A549 (cell line): ENCODE measurements at regions of chr17 and their contacts with region 1.

Region 1: DNA sequence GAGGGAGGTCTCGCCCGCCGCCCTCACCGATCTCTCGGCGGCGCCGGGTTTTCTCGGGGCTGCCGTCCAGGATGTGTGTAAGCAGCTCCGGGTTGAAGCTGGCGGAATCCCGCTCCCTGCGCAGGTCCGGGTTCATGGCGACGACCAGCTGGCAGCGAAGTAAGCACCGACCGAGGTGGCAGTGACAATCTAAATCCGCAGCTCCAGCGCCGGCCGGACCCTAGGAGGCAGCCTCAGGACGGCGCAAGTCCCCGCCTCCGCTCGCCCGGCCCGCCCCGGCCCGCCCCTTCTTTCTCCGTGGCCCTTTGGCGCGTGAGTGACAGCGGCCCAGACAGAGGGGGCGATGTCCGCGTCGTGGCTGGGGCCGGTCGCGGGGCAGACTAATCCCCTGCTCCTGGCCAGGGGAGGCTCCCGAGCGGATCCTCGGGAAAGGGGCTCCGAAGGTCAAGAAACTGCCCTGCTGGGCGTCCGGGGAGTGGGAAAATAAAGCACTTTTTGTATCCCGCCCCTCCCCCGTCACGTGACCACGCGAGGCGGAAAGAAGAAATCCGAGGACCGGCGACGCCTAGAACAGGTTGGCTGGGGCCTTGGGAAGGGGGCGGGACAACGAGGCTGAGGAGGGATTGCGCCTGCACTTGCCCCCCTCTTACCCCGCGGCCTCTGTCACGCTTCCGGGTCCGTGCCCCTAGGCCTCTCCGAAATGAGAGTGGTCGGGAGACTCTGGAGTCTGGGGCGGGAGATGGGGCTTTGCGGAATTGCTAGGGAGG is at the starts of genes ACOX1 and TEN1:
- DNase-seq: peak; percentile 93 to 99
- ATAC-seq: peak; percentile 95 to 97
- H3K4me3 ChIP-seq: peak within 1 kb of the TSS; percentile 84
- H3K27ac ChIP-seq: peak within 1 kb of the TSS; percentile 90 to 93
- H3K4me1 ChIP-seq: peaks cover 43% of the 10 kb centered on the region
- CTCF ChIP-seq: peak; percentile 21; the same call in 2 of the 3 replicates
- EP300 ChIP-seq: no peak
- POLR2A ChIP-seq: peak; percentile 92
- RAD21 ChIP-seq: no peak
- polyA plus RNA-seq, gene ACOX1: 31.1 and 34.3 TPM in 2 replicates
- polyA plus RNA-seq, gene TEN1: 11.8 TPM in 2 replicates

Region 2: DNA sequence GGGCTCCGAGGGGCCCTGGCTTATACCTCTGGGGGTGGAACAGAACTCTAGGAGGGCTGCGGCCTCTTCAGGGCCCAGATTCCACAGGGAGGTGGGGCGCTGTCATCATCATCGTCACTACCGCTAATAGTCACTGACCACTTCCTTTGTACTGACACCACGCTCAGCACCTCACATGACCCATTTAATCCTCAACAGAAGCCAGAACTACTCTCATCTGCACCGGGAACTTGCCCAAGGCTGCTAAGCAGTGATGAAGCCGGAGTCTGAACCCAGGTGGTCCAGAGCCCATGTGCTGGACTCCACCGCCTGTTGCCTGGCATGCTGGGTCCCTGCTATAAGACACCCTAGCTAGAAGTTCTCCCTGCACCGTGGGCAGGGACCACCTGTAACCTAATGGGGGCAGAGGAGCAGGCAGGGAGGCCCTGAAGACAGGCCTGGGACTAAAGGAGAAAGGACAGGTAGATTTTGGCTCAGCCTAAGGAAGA is 146.9 kb before region 1 on chr17:
- CTCF ChIA-PET with region 1: no interaction called
- POLR2A ChIA-PET with region 1: no interaction called
- DNase-seq: no peak
- ATAC-seq: no peak
- H3K4me3 ChIP-seq: no peak overlapping the region
- H3K27ac ChIP-seq: no peak overlapping the region
- H3K4me1 ChIP-seq: peaks cover 5% of the 10 kb centered on the region; the same call in 1 of the 3 replicates
- CTCF ChIP-seq: no peak
- EP300 ChIP-seq: no peak
- POLR2A ChIP-seq: no peak
- RAD21 ChIP-seq: no peak

Region 3: DNA sequence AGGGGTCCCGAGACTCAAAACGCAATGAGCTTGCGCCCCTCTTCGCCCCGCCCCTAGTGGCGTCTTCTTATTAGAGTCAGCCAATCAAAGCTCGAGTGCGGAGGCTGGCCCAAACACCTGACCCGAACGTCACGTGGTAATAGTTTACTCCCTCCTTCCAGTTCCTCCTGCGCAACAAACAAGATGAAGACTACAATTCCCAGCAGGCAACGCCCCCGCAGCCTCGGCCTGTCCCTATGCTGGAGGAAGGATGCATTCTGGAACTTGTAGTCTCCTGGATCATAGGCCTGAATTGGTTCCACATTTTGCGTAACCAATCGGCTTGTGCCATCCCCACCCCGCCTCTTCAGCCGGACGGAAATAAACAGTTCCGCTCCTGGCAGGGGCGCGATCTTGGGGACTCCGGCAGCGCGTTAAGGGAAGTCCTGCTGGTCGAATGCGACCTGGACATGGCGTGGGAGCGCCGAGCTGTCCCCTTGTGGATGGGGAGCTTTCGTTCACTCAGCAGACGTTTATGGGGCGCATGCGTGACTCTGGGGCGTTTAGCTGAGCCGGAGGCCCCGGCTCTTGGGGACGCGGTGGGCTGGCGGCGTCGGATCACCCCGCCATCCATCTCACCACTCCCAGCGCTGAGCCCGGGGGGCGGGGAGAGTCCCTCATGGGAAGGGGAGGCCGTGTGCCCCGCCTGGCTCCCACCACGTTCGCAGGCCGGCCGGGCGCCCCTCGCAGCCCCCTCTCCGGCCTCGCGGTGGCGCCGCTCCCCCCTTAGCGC is 123.6 kb before region 1 on chr17 and contains the start of gene WBP2:
- CTCF ChIA-PET with region 1: no interaction called
- POLR2A ChIA-PET with region 1: no interaction called
- DNase-seq: peak; percentile 100
- ATAC-seq: peak; percentile 90 to 95
- H3K4me3 ChIP-seq: peak within 1 kb of the TSS; percentile 58
- H3K27ac ChIP-seq: peak within 1 kb of the TSS; percentile 83 to 91
- H3K4me1 ChIP-seq: peaks cover 19% of the 10 kb centered on the region
- CTCF ChIP-seq: peak; percentile 63
- EP300 ChIP-seq: no peak
- POLR2A ChIP-seq: peak; percentile 95
- RAD21 ChIP-seq: peak in 1 of 2 experiments; percentile 65; a peak in 4 of 5 replicates
- polyA plus RNA-seq, gene WBP2: 35.6 and 39.7 TPM in 2 replicates

Region 4: DNA sequence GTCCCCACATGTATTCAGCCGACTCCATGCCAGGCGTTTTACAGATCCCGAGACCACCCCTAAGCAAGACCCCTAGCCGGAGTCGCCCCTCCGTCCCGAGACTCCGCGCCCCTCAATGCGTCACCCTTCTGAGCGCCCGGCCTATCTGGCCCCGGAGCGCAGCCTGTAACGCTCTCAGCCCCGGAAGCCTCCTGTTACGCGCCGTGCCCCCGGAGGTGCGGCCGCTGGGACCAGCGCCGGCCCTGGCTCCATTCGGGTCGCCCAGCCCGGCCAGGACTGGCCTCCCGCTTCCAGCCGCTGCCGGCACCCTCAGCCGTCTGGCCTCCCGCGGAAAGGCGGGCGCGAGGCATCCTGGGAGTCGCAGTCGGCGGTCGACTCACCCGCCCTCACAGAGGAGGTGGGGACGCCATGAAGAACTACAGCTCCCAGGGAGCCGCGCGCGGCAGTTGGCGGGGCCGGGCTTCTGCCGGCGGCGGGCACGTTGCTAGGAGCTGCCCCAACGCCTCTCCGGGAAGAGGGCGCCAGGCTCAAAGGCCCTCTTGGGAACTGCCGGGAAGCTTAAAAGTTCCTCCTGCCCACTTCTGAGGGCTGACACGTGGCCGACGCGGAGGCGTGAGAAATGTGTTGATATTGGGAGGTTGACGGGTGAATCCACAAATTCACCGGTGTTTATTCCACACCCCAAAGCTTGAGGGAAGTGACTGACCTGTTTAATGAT is 38.2 kb before region 1 on chr17 and contains the start of gene FBF1:
- CTCF ChIA-PET with region 1: interaction called, 3 read pairs
- POLR2A ChIA-PET with region 1: interaction called, 13 read pairs
- DNase-seq: peak; percentile 97 to 99
- ATAC-seq: peak; percentile 100
- H3K4me3 ChIP-seq: peak within 1 kb of the TSS; percentile 67
- H3K27ac ChIP-seq: peak within 1 kb of the TSS; percentile 82 to 94
- H3K4me1 ChIP-seq: peaks cover 5% of the 10 kb centered on the region; the same call in 1 of the 3 replicates
- CTCF ChIP-seq: no peak
- EP300 ChIP-seq: no peak
- POLR2A ChIP-seq: peak; percentile 96
- RAD21 ChIP-seq: no peak
- polyA plus RNA-seq, gene FBF1: 7.9 and 8.5 TPM in 2 replicates

Region 5: DNA sequence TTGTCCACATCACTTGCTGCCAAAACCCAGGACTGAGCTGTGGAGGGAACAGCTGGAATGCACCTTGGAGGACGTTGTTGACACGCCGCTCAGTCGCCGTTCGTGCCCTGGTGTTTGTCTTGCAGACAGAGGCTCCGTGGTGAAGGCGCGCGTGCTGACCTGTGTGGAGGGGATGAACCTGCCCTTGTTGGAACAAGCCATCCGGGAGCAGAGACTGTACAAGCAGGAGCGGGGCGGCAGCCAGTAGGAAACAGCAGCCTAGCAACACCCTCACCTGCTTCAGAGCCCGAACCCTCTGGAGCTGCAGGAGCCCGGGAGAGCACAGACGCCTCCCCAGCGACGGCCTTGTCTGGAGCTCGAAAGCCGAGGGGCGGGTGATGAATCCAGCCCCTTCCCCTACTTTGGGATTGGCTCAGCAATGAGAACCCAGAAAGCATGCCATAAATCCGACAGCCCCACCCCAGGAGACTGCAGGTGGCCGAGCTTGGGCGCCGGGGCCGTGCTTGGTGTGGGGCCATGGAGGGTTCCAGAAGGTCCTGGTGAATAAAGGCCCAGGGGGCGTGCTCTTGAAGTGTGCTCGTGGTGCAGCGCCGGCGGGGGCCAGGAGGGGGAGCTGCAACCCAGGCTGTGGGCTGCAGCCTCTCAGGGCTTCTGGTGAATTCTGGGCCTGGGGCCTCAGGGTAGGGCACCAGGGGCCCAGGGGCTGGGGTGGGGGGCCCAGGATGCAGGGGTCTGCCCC is 21.1 kb after region 1 on chr17:
- CTCF ChIA-PET with region 1: interaction called, 36 read pairs
- POLR2A ChIA-PET with region 1: interaction called, 6 read pairs
- DNase-seq: peak; percentile 73 to 96
- ATAC-seq: peak; percentile 68 to 84; a peak in 5 of 6 replicates
- H3K4me3 ChIP-seq: no peak overlapping the region
- H3K27ac ChIP-seq: peak overlapping the region in 1 of 2 experiments; percentile 52; a peak in 2 of 6 replicates
- H3K4me1 ChIP-seq: peaks cover 15% of the 10 kb centered on the region; the same call in 2 of the 3 replicates
- CTCF ChIP-seq: peak; percentile 77
- EP300 ChIP-seq: no peak
- POLR2A ChIP-seq: no peak
- RAD21 ChIP-seq: peak; percentile 72 to 74

Region 6: DNA sequence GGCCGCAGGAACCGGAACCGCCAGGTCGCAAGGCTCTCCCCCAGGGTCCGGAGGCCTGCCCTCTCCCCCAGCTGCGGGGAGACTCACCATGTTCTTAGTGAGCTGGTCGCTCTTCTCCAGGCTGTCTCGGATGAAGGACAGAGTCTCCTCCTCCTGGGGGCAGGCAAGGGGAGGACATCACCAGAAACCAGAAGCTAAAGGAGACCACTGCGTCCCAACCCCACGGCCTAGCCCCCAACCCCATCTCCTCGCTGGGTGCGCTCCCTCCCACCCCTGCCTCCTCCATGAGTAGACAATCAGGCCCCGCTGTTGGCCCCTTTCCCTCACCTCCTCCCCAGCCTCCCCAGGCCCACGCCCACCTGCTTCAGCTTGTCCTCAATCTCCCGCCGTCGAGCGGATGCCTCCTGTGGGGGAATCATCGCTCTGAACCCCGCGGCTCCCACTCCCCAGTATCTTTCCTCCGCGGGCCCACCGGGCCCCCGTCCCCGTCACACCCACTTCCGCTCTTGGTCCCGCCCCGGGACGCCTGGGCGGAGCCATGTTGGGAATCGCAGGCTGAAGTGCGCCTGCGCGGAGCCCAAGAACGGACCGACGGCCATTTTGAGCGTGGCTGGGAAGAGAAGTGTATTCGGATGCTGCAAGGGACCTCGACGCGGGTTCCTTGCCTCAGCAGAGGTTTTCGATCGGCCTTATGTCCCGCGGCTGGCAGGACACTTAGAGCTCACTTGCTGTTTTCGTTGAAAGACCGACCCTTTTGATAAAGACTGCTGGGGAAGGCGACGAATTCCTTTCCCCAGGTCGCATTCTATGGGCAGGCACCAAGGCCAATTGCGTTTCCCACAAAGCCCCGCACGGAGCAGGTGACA is 124.4 kb after region 1 on chr17 and contains the start of gene EXOC7:
- CTCF ChIA-PET with region 1: no interaction called
- POLR2A ChIA-PET with region 1: no interaction called
- DNase-seq: peak; percentile 95
- ATAC-seq: peak; percentile 93 to 96
- H3K4me3 ChIP-seq: peak within 1 kb of the TSS; percentile 69
- H3K27ac ChIP-seq: peak within 1 kb of the TSS; percentile 84 to 87
- H3K4me1 ChIP-seq: peaks cover 11% of the 10 kb centered on the region
- CTCF ChIP-seq: no peak
- EP300 ChIP-seq: no peak
- POLR2A ChIP-seq: peak; percentile 85
- RAD21 ChIP-seq: no peak
- polyA plus RNA-seq, gene EXOC7: 64.5 and 76.4 TPM in 2 replicates

Region 7: GRCh38 chr17:76968707-76969597 is 989.8 kb after region 1 on chr17:
- CTCF ChIA-PET with region 1: no interaction called
- POLR2A ChIA-PET with region 1: no interaction called
- DNase-seq: no peak
- ATAC-seq: no peak; a peak in 1 of 6 replicates
- H3K4me3 ChIP-seq: no peak overlapping the region
- H3K27ac ChIP-seq: peak overlapping the region in 1 of 2 experiments; percentile 33; a peak in 2 of 6 replicates
- H3K4me1 ChIP-seq: peaks cover 8% of the 10 kb centered on the region; the same call in 2 of the 3 replicates
- CTCF ChIP-seq: no peak
- EP300 ChIP-seq: no peak
- POLR2A ChIP-seq: no peak
- RAD21 ChIP-seq: no peak